K562 (cell line): ENCODE measurements at regions of chr4 and their contacts with region 1.

Region 1: DNA sequence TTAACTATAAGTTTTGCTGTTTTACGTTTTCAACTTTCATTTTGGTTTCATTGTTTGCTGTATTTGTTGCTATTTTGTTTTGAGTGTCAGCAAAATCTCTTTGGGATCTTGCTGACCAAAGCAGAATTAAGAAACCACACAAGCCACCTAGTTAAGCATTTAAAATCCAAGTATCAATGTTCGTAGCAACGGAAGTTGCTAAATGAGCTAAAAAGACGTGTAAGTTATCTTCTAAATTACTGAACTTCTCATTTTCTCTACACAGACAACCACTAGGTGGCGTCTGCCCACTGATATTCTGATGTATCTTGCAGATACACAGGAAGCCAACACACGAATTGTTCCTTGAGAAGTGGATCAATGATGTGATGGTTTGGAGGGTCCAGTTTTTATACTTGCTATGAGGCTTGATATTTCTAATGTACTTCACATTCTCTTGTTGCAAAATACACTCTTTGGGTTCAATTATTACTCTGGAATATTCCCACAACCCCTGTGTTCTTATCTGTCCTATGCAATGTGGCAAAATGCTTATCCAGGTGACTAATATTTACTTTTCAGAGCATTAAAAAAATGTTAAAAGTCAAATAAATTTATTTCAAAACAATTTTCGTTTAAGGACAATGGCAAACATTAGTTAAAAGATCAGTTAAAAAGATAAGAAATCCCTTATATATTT is 250.5 kb downstream of the TECRL start:
- DNase-seq: peak; percentile 24 to 60 (median 29)
- ATAC-seq: no peak
- H3K4me3 ChIP-seq: no peak overlapping the region
- H3K27ac ChIP-seq: no peak overlapping the region
- H3K4me1 ChIP-seq: no peaks in the 10 kb centered on the region
- H3K27me3 ChIP-seq: no peaks in the 10 kb centered on the region
- CTCF ChIP-seq: peak; percentile 28 to 54 (median 50); a peak in 5 of 6 replicates
- EP300 ChIP-seq: no peak
- POLR2A ChIP-seq: no peak
- RAD21 ChIP-seq: peak; percentile 34 to 53

Region 2: DNA sequence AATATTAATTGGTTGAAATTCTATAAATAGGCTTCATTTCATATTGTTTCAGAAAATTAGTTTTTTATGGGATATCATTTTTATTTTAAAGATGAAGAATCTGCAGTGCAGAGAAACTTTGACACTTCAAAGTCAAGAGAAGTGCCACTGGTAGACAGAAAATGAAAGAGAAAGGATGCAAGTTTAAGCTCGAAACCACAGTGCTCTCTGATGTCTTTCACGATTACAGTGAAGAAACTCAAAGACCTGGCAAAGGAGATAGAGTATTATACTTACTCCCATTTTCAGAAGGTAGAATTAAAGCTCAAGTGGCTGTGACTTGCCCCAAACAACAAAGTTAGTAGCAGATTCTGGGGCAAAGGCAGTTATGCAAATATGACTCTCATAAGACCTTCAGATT is 494.9 kb before region 1 on chr4:
- CTCF ChIA-PET with region 1: no interaction called
- POLR2A ChIA-PET with region 1: no interaction called
- in situ Hi-C with region 1: no loop called
- intact Hi-C with region 1: no loop called
- DNase-seq: no peak
- ATAC-seq: no peak
- H3K4me3 ChIP-seq: no peak overlapping the region
- H3K27ac ChIP-seq: no peak overlapping the region
- H3K4me1 ChIP-seq: no peaks in the 10 kb centered on the region
- H3K27me3 ChIP-seq: no peaks in the 10 kb centered on the region
- CTCF ChIP-seq: no peak
- EP300 ChIP-seq: no peak
- POLR2A ChIP-seq: no peak
- RAD21 ChIP-seq: no peak

Region 3: DNA sequence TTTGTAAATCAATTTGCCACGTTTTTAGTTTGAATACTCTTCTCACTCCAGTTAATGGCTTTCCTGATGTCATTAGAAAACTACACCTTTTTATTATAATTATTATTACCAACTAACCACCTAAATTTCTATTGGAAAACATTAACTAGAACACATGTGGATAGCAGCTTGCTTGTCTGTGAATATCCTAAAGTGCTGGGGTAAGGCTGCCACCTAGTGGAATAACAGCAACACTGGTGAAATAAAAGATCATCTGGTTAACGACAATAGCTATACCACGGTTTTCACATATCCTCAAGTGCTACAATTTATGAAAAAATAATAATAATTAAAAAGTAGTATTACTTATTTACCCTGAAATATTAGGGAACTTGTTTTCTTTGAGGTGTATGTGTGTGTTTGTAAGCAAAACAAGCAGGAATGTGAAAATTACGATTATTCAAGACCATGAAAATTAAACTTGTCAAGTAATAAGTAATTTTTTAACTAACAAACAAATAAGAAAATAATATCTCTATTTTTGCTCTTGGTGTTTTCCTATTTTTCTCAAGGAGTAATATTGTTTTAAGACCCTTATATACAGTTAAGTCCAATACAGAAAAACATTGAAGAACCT is 380.6 kb after region 1 on chr4:
- CTCF ChIA-PET with region 1: no interaction called
- POLR2A ChIA-PET with region 1: no interaction called
- in situ Hi-C with region 1: no loop called
- intact Hi-C with region 1: loop called (anchors 2 kb)
- DNase-seq: peak; percentile 37 to 61 (median 44)
- ATAC-seq: peak; percentile 64; the same call in 1 of the 3 replicates
- H3K4me3 ChIP-seq: no peak overlapping the region
- H3K27ac ChIP-seq: no peak overlapping the region
- H3K4me1 ChIP-seq: no peaks in the 10 kb centered on the region
- H3K27me3 ChIP-seq: no peaks in the 10 kb centered on the region
- CTCF ChIP-seq: peak; percentile 31 to 64 (median 50); a peak in 5 of 6 replicates
- EP300 ChIP-seq: no peak
- POLR2A ChIP-seq: no peak
- RAD21 ChIP-seq: peak; percentile 64 to 66